PC-3 (cell line): ENCODE measurements at regions of chr16 and their contacts with region 1.

Region 1: GRCh38 chr16:57202095-57202886 is 16.2 kb downstream of the RSPRY1 start:
- DNase-seq: no peak
- ATAC-seq: no peak
- H3K4me3 ChIP-seq: no peak overlapping the region
- H3K27ac ChIP-seq: no peak overlapping the region
- H3K4me1 ChIP-seq: no peaks in the 10 kb centered on the region
- H3K27me3 ChIP-seq: no peaks in the 10 kb centered on the region
- CTCF ChIP-seq: no peak

Region 2: GRCh38 chr16:57166951-57167350 is 35.3 kb before region 1 on chr16:
- CTCF ChIA-PET with region 1: no interaction called
- POLR2A ChIA-PET with region 1: no interaction called
- intact Hi-C with region 1: no loop called
- DNase-seq: peak; percentile 4
- ATAC-seq: no peak
- H3K4me3 ChIP-seq: no peak overlapping the region
- H3K27ac ChIP-seq: no peak overlapping the region
- H3K4me1 ChIP-seq: no peaks in the 10 kb centered on the region
- H3K27me3 ChIP-seq: no peaks in the 10 kb centered on the region
- CTCF ChIP-seq: no peak

Region 3: DNA sequence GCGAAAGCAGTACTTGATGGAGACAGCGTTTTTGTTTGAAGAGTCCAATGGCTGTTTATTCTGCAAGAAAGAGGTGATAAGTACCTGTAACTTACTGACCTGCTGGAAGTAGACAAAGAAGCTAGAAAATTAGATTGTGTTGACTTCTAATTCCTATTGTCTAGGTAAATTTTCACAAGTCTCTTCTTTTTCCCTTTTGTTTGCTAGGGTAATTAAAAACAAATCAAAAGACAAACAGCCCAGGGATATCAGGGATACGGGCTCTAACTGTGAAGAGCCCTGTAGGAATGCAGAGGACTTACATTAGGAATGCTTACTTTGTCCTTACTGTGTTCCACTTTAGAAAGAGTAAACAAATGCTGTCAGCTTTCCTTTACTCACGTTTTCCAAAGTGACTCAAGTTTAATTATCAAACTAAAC is 23.5 kb before region 1 on chr16:
- CTCF ChIA-PET with region 1: no interaction called
- POLR2A ChIA-PET with region 1: no interaction called
- intact Hi-C with region 1: no loop called
- DNase-seq: no peak
- ATAC-seq: 0 out of 2 replicates have a peak, but pooled peaks have one; percentile 43
- H3K4me3 ChIP-seq: no peak overlapping the region
- H3K27ac ChIP-seq: no peak overlapping the region
- H3K4me1 ChIP-seq: no peaks in the 10 kb centered on the region; the same call in 1 of the 2 replicates
- H3K27me3 ChIP-seq: no peaks in the 10 kb centered on the region
- CTCF ChIP-seq: no peak

Region 4: DNA sequence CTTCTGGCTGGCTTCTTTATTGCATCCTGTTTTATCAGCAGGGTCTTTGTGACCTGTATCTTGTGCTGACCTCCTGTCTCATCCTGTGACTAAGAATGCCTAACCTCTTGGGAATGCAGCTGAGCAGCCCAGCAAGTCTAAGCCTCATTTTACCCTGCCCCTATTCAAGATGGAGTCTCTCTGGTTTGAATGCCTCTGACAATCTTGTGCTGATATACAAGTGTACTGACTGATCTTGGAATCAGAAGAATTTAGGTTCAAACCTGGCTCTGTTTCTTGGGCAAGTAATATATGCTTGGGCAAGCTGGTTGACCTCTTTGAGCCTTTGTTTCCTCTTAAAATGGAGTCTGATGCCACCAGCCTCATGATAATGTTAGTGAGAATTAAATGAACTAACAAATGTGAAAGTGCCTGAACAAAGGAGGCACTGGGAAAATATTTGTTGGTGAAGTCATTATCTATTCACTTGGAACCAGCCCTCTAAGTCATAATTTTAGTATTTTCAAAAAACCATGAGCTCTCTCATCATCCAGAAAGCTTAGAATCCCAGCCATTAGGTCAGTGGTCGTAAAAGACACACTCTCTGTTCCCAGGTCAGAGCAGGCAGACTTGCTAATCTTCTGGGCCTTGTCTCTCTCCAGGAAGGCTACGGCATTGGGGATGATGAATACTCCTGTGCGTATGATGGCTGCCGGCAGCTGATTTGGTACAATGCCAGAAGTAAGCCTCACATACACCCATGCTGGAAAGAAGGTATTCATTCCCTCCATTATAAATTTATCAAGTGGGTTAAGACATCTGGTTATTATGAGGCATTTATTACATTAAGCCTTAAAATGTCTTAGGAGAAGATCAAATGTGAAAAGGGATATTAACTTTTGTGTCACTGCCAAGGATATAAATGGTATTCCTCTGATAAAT is 24.7 kb after region 1 on chr16:
- CTCF ChIA-PET with region 1: no interaction called
- POLR2A ChIA-PET with region 1: no interaction called
- intact Hi-C with region 1: no loop called
- DNase-seq: no peak
- ATAC-seq: no peak
- H3K4me3 ChIP-seq: no peak overlapping the region
- H3K27ac ChIP-seq: no peak overlapping the region
- H3K4me1 ChIP-seq: no peaks in the 10 kb centered on the region
- H3K27me3 ChIP-seq: no peaks in the 10 kb centered on the region
- CTCF ChIP-seq: no peak

Region 5: GRCh38 chr16:57391708-57392107 is 189.4 kb after region 1 on chr16:
- CTCF ChIA-PET with region 1: no interaction called
- POLR2A ChIA-PET with region 1: interaction called, 10 read pairs
- intact Hi-C with region 1: no loop called
- DNase-seq: no peak
- ATAC-seq: no peak
- H3K4me3 ChIP-seq: no peak overlapping the region
- H3K27ac ChIP-seq: no peak overlapping the region
- H3K4me1 ChIP-seq: no peaks in the 10 kb centered on the region
- H3K27me3 ChIP-seq: no peaks in the 10 kb centered on the region
- CTCF ChIP-seq: no peak